H1 (cell line): ENCODE measurements at regions of chr11 and their contacts with region 1.

Region 1: DNA sequence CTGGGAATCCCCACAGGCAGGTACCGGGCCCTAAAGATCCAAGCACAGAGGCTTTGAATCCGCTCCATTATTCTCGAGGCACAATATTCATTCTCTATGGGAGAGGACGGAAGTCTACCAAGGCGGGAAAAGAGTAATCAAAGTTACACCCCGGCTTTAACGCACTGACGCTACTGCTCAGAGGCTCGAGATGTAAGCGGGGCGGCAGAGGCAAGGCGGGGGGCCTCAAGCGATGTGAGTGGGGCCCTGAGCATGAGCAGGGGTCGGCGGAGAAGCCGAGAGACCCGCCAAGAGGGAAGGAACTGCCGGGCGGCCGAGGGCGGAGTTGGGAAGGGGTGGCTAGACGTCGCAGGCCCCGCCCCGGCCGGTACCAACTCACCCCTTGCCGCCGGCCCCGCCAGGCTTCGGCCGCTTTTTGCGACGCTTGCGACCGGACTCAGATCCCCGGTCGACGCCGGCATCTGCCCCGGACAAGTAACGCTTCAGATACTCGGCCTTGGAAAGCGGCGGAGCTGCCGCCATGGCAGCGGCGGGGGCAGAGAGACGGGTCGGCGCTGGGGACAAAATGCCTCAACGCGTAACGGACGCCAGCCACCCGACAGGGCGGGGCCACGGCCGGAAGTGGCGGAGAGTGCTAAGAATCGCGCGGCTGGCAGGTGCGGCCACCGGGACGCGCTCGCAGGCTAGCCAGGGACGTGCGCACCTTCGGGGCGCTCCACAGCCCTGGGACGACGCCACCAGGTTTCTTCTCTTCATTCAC is at the start of gene BUD13:
- DNase-seq: peak; percentile 50 to 96
- H3K4me3 ChIP-seq: peak within 1 kb of the TSS; percentile 76 to 96 (median 84)
- H3K27ac ChIP-seq: peak within 1 kb of the TSS; percentile 90
- H3K4me1 ChIP-seq: peaks cover 0 to 5% (median 3%) of the 10 kb centered on the region in 4 experiments; a peak in 2 of 7 replicates
- H3K27me3 ChIP-seq: no peaks in the 10 kb centered on the region
- CTCF ChIP-seq: no peak
- EP300 ChIP-seq: peak; percentile 26 to 40; a peak in 1 of 3 replicates
- POLR2A ChIP-seq: peak; percentile 20 to 96
- RAD21 ChIP-seq: no peak
- total RNA-seq, gene BUD13: 24.8 TPM in 2 replicates

Region 2: DNA sequence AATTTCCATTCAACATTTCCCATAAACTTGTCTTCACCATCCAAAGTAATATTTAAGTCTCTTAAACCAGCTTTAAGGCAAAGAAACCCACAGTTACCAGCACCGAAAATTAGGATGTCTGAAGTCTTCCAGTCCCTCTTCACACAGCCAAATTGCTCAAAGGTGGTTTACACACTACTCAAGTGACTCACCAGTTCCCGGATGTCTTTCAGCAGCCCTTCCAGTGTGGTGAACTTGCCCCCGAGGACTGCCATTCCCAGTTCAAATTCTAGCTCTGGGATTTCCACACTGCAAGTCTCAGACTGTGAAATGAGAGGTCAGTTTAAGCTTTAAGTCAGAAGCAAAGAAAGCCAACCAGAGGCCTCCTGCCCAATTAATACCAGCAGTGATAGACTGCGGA is 10.1 kb after region 1 on chr11:
- CTCF ChIA-PET with region 1: interaction called, 4 read pairs
- POLR2A ChIA-PET with region 1: interaction called, 29 read pairs
- DNase-seq: no peak
- H3K4me3 ChIP-seq: no peak overlapping the region
- H3K27ac ChIP-seq: no peak overlapping the region
- H3K4me1 ChIP-seq: peaks cover 0 to 7% (median 2%) of the 10 kb centered on the region in 4 experiments; a peak in 4 of 7 replicates
- H3K27me3 ChIP-seq: no peaks in the 10 kb centered on the region
- CTCF ChIP-seq: no peak
- EP300 ChIP-seq: no peak
- POLR2A ChIP-seq: no peak
- RAD21 ChIP-seq: no peak